Lower leg skin (tissue), 4 donors: ENCODE measurements at regions of chr6 and their contacts with region 1.

Region 1: DNA sequence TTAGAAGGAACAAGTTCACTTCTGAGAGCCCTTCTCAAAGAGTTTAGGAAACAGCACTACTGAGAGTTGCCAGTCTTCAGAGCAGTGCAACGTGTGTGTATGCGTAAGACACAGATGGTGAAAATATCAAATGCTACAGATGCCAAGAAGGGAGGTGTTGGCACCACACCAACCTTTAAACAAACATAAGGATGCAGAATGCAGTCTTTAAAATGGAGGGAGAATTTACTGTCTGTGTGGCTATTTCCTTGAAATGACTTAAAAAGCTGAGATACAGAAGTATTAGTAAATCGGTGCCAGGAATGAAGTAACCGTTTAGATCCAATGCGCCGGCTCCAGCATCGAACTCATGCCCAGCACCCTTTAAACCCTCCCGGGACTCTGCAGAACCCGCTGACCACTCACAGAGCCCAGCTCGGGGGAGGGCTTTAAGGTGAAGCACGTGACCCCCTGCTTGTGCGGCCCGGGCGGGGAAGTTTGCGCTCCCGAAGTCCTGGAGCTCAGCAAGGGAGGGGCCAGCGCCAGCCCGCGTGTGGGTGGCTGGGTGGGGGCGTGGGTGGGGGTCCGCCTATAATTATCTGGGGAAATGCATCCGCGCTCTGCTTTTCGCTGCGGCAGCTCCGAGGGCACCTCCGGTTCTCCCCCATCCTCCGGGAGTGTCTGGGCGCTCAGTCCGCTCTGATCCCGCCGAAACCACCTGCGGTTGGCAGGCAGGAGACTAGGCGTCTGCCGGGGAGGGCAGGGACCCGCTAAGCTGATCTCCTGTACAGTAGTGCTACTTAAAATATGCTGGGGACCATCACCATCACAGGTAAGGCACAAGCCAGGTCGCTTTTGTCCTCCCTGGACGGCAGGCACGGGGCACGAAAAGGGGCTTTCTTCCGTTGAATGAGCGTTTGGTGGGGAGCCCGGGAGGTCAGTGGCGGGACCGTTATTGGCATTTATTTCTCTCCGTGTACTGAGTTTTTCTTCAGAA is 66.0 kb downstream of the ZBTB2 start:
- DNase-seq: peak; percentile 43 to 91
- H3K4me3 ChIP-seq: peak overlapping the region; percentile 8
- CTCF ChIP-seq: no peak
- POLR2A ChIP-seq: no peak

Region 2: GRCh38 chr6:150894935-150895552 is 430.3 kb before region 1 on chr6:
- intact Hi-C with region 1: loop called (anchors 5 kb)
- DNase-seq: peak in 1 of 2 donors; percentile 57
- H3K4me3 ChIP-seq: no peak overlapping the region
- CTCF ChIP-seq: no peak
- POLR2A ChIP-seq: no peak

Region 3: DNA sequence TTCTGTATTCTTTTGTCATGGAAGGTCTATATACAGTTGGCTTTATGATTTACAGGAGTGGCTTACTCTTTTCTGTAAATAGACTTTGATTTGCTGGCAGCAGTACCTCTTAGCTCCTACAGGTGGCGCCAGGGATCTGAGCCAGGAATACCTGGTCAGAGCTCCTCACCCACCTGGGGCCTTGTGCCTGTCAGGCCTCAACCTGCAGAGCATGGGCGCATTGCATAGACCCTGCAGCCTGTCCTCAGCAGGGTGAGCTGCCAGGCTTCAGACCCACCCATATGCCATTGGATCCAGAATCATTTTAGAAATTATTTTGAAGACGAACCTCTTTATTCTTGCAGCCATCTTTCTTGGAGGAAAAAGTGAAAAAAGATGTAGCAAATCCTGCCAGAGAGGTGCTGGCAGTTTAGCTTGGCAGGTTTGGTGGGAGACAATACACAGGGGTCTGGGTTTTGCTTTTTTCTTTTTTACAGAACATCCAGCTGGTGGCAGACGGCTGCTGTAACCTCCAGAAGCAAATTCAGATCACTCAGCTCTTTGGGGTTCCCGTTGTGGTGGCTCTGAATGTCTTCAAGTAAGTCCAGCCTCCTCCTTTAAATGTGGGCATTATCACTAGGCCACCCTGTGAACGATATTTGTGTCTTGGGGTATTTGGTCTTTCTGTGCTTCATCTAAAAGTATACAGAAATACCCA is 310.8 kb before region 1 on chr6:
- intact Hi-C with region 1: loop called (anchors 5 kb)
- DNase-seq: peak; percentile 40 to 92
- H3K4me3 ChIP-seq: no peak overlapping the region
- CTCF ChIP-seq: peak in 1 of 3 donors; percentile 93
- POLR2A ChIP-seq: no peak

Region 4: DNA sequence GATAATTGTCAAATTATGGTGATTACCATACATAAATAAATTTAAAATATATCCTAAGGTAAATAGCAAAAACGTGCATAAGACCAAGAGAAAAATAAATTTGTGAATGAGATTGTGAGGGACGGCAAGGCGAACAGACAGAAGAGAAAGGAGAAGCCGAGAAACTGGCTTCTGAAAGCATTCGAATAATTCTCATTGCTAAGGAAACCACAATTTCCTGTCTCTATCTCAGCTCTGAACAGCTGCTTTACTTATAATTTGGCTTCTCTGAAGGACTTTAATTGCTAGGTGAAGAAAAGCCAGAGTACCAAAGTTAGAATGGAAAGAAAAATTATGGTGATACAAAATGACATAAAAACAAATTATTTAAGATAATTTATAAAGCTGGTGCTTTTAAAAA is 1884.7 kb after region 1 on chr6:
- intact Hi-C with region 1: no loop called
- DNase-seq: no peak
- H3K4me3 ChIP-seq: no peak overlapping the region
- CTCF ChIP-seq: no peak
- POLR2A ChIP-seq: no peak